ENCODE measurements at regions of chr6 and their contacts with region 1.

Region 1: DNA sequence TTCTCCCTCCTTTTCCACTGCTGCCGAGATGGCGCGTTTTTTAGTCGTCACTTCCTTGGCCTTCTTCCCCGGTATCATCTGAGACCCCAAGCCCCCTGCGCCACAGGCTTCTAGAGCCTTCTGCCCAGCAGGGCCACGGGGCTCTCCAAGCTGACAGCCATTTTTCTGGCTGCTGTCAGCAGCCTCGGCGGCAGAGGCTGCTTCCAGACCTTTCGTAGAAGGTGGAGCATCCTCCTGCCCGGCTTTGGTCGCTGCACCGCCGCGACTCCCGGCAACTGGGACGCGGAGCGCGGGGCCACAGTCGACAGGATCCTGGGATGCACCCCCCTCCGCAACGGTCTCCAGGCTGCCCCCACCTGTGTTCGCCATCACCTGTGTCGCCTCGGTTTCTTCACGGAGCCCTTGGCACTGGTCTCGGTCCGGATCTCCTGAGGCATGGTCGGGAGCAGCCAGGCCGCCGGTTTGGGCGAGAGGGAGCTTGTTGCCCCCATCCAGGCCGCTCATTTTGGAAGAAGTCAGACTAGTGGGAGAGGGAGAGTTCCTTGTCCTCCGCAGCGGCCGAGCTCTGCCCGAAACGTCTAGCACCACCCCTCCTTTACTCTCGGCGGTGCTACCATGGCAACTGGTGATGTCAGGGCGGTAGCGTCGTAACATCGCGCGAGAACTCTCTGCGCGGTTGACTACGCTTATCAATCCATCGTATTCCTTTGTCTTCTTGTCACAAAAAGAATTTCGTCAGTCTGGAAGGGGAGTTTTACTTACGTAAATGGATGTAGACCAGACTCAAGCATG is at the start of gene TSPYL4:
- DNase-seq: peak; percentile 96 to 97
- ATAC-seq: peak; percentile 98
- H3K4me3 ChIP-seq: peak within 1 kb of the TSS; percentile 72 to 84
- H3K27ac ChIP-seq: peak within 1 kb of the TSS; percentile 92 to 96
- H3K4me1 ChIP-seq: peaks cover 5 to 10% of the 10 kb centered on the region in 2 donors
- H3K27me3 ChIP-seq: no peaks in the 10 kb centered on the region
- total RNA-seq, gene TSPYL4: 15.7 to 18.4 TPM

Region 2: GRCh38 chr6:116217069-116217468 is 36.6 kb before region 1 on chr6:
- intact Hi-C with region 1: loop called in 1 of 2 experiments (anchors 5 kb)
- DNase-seq: no peak
- ATAC-seq: no peak
- H3K4me3 ChIP-seq: no peak overlapping the region
- H3K27ac ChIP-seq: no peak overlapping the region
- H3K4me1 ChIP-seq: no peaks in the 10 kb centered on the region
- H3K27me3 ChIP-seq: no peaks in the 10 kb centered on the region

Region 3: GRCh38 chr6:116287689-116288282 is 34.1 kb after region 1 on chr6:
- intact Hi-C with region 1: no loop called
- DNase-seq: no peak
- ATAC-seq: no peak
- H3K4me3 ChIP-seq: no peak overlapping the region
- H3K27ac ChIP-seq: no peak overlapping the region
- H3K4me1 ChIP-seq: no peaks in the 10 kb centered on the region
- H3K27me3 ChIP-seq: no peaks in the 10 kb centered on the region

Measured in aorta (tissue), 5 donors.